ENCODE measurements at regions of chr7 and their contacts with region 1.

Region 1: GRCh38 chr7:154942691-154943090 is 60.2 kb downstream of the PAXIP1 start:
- DNase-seq: no peak
- H3K4me3 Mint-ChIP-seq: no peak overlapping the region
- H3K27ac Mint-ChIP-seq: no peak overlapping the region
- H3K4me1 Mint-ChIP-seq: no peaks in the 10 kb centered on the region
- H3K27me3 Mint-ChIP-seq: no peaks in the 10 kb centered on the region

Region 2: DNA sequence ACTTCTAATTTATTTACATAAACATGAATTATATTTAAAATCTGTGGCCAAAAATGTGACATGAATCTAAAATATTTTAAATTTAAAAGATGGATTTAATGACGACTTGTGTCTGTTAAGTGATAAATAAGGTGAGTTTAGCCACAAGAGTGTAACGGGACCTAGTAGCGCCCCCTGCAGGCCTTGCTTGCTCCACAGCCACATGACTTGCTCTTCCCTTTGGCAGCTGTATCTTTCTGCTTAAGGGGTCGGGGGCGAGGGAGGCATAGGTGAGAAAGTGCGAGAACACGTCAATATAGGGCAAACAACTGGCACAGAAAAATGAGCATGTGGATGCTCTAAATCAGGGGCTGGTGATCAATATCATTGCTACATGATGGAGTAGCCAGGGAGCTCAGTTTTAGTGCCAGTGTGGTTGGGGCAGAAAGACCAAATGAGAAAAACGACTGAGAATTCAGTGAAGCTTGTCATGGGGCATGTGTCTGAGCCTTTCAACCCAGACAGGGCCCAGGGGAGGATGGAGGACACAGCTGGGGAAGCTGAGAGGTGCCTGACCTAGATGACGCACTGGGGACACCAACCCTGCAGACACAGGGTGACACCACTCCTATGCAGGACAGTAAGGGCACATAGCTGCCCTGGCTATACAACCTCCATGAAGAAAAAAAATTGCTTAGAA is 10.5 kb after region 1 on chr7:
- CTCF ChIA-PET with region 1: interaction called, 18 read pairs
- DNase-seq: peak; percentile 77
- H3K4me3 Mint-ChIP-seq: no peak overlapping the region
- H3K27ac Mint-ChIP-seq: no peak overlapping the region
- H3K4me1 Mint-ChIP-seq: no peaks in the 10 kb centered on the region
- H3K27me3 Mint-ChIP-seq: no peaks in the 10 kb centered on the region